ENCODE measurements at regions of chr21 and their contacts with region 1.

Region 1: DNA sequence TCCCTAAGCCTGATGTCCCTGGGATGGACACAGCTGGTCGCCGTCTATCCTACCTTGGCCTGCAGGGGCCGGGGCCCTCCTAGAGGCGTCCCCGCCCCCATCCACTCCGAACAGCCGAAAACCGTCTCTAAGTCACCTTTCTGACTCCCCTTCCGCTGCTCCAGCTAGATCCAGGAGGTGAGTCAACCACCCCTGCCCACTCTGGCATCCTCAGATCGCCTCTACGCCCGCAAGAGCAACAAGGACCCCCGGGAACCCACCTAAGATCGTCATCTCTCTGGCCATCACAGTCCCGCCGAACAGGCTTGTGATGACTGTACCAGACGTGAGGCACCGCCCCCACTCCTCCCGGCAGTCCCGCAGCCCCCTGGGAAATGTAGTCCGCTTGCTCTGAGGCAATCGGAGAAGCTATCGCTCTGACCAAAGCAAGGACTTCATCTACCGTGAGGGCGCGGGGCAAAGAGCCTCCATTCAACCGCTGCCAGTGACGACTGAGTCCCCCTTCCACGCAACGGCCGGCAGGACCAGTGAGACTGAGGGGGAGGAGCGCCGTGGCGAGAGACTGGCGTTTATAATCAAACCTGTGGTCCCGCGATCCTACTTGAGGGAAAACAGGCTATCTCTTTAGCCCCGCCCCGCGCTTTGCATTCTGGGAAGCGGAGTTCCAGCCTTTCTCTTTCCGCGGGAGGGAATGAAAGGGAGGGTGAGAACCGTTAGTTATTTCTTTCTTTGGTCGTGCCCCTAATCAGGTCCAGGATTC is at the start of gene HSPA13:
- DNase-seq: peak; percentile 99
- ATAC-seq: peak; percentile 98
- H3K4me3 ChIP-seq: peak within 1 kb of the TSS; percentile 90 to 97 (median 90)
- H3K27ac ChIP-seq: peak within 1 kb of the TSS; percentile 68
- H3K4me1 ChIP-seq: peaks cover 29% of the 10 kb centered on the region
- H3K27me3 ChIP-seq: no peaks in the 10 kb centered on the region; a peak in 1 of 5 replicates
- CTCF ChIP-seq: no peak
- EP300 ChIP-seq: 0 out of 4 replicates have a peak, but pooled peaks of 1 of the 2 experiments have one; percentile 16
- POLR2A ChIP-seq: peak; percentile 65 to 70
- RAD21 ChIP-seq: 0 out of 2 replicates have a peak, but pooled peaks have one; percentile 16
- total RNA-seq, gene HSPA13: 20.5 and 28.4 TPM in 2 replicates

Region 2: GRCh38 chr21:14942801-14943490 is 559.9 kb after region 1 on chr21:
- CTCF ChIA-PET with region 1: no interaction called
- POLR2A ChIA-PET with region 1: no interaction called
- in situ Hi-C with region 1: no loop called
- intact Hi-C with region 1: loop called (anchors 5 kb)
- DNase-seq: peak; percentile 91
- ATAC-seq: peak; percentile 96
- H3K4me3 ChIP-seq: no peak overlapping the region; a peak in 1 of 6 replicates
- H3K27ac ChIP-seq: peak overlapping the region; percentile 71
- H3K4me1 ChIP-seq: peaks cover 55% of the 10 kb centered on the region
- H3K27me3 ChIP-seq: no peaks in the 10 kb centered on the region
- CTCF ChIP-seq: no peak
- EP300 ChIP-seq: peak; percentile 62 to 97
- POLR2A ChIP-seq: no peak
- RAD21 ChIP-seq: no peak

Region 3: DNA sequence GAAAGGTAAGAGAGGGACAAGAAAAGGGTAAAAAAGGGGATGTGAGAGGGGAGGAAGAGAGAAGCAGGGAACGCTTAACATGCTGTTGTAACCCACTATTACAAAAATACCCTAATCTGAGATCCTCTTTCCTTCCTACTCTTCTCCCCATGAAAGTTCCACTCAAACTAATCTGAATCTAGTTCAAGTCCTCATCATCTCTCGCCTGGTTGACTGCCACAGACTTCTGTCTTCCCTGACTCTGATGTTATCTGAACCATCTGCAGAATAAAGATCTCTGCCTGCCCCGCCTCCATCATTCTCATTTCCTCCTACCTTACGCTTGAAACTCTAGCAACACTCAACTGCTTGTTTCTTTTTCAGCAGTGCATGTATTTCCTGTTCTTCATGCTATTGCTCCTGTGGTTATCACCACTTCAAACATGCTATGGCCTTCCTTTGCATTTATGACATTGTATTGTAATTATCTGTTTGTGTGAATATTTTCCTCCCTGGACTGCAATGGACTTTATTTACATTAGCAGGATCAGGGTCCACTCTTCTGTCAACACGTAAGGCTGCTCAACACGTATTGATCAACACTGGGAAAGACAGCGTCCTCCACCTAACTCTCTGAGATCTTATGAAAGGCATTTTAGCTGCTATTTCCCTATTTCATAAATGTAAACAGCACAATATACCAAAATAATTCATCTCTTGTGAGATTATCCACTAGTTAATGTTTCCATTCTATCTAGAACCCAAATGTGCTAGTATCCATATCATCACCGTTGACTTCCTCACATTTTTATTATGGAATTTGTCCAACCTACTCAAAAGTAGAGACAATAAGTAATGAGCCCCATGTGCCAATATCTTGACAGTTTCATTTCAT is 1131.3 kb after region 1 on chr21:
- CTCF ChIA-PET with region 1: no interaction called
- POLR2A ChIA-PET with region 1: no interaction called
- in situ Hi-C with region 1: no loop called
- intact Hi-C with region 1: loop called (anchors 5 kb)
- DNase-seq: peak; percentile 94
- ATAC-seq: peak; percentile 100
- H3K4me3 ChIP-seq: peak overlapping the region; percentile 36 to 41 (median 38); a peak in 4 of 6 replicates
- H3K27ac ChIP-seq: peak overlapping the region; percentile 79
- H3K4me1 ChIP-seq: peaks cover 42% of the 10 kb centered on the region
- H3K27me3 ChIP-seq: no peaks in the 10 kb centered on the region; a peak in 1 of 5 replicates
- CTCF ChIP-seq: no peak
- EP300 ChIP-seq: peak; percentile 76 to 92; a peak in 3 of 4 replicates
- POLR2A ChIP-seq: no peak
- RAD21 ChIP-seq: peak; percentile 30; the same call in 1 of the 2 replicates

Region 4: GRCh38 chr21:15729674-15730483 is 1346.9 kb after region 1 on chr21 and contains the start of gene USP25:
- CTCF ChIA-PET with region 1: no interaction called
- POLR2A ChIA-PET with region 1: no interaction called
- in situ Hi-C with region 1: no loop called
- intact Hi-C with region 1: loop called (anchors 10 kb)
- DNase-seq: peak; percentile 68
- ATAC-seq: peak; percentile 91
- H3K4me3 ChIP-seq: peak within 1 kb of the TSS; percentile 80 to 93 (median 85)
- H3K27ac ChIP-seq: peak within 1 kb of the TSS; percentile 78
- H3K4me1 ChIP-seq: peaks cover 18% of the 10 kb centered on the region
- H3K27me3 ChIP-seq: peaks cover 0 to 7% of the 10 kb centered on the region in 2 experiments; a peak in 3 of 5 replicates
- CTCF ChIP-seq: peak; percentile 43; the same call in 1 of the 2 replicates
- EP300 ChIP-seq: no peak
- POLR2A ChIP-seq: peak; percentile 78 to 92
- RAD21 ChIP-seq: peak; percentile 71
- total RNA-seq, gene USP25: 26.3 and 34.5 TPM in 2 replicates